Vagina (tissue), 2 donors: ENCODE measurements at regions of chr11 and their contacts with region 1.

Region 1: DNA sequence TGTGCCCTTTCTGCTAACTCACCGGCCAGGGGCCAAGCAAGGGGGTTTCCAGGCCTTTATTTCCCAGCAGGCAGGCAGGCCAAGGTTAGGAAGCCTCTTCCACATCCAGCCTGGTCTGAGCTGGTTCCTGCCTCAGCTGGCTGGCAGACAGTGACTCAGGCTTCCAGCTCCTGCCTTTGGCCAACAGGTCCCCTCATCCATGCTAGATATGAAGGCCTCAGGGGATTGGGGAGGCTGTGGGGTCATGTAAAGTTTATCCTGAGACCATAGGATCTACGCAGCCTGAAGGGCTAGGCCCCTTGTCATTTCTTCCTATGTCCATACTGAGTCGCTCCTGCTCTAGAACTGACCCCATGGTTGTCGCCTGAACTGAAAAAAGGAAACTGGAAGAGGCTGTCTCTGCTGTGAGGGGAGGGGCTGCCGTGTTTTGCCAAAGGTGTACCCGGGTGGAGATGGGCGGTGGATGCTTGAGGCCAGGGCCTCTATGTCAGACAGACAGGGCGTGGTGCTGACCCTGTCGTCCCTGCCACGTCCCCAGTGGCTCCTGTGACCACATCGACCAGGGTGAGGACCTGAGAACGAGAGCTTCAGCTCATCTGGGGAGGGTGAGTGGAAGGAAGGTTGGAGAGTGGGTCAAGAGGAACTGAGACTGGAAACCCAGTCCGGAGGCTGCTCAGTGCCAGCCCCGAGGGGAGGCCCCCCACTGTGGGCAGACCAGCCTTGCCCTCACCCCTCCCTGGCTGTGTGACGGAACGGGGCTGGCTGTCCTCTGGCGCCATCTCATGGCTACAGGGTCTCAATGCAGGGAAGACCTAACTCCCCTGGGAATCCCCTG is 17.0 kb downstream of the P2RY6 start:
- DNase-seq: no peak
- H3K4me3 ChIP-seq: no peak overlapping the region
- H3K27ac ChIP-seq: peak overlapping the region; percentile 3
- H3K4me1 ChIP-seq: peaks cover 12% of the 10 kb centered on the region
- H3K27me3 ChIP-seq: no peaks in the 10 kb centered on the region
- CTCF ChIP-seq: peak; percentile 35 to 81 (median 74)
- POLR2A ChIP-seq: no peak

Region 2: DNA sequence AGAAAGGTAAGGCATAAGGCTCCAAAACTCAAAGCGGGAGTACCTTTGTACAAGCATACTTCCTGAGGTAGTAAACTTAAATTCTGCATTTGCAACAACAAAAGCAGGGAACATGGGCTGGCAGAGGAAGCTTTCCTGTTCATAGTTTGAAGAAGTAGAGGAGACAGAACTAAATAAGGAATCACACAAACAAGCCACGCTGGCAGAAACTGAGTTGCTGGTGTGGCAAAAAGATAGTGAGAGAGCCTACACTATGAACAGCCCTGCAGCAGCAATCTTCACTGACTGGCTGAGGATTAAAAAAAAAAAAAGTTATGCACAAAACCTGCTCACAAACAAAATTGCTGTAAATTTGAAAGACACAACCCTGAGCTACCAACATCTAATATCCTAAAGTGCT is 193.5 kb before region 1 on chr11:
- intact Hi-C with region 1: no loop called
- DNase-seq: no peak
- H3K4me3 ChIP-seq: no peak overlapping the region
- H3K27ac ChIP-seq: no peak overlapping the region
- H3K4me1 ChIP-seq: peaks cover 11% of the 10 kb centered on the region
- H3K27me3 ChIP-seq: no peaks in the 10 kb centered on the region
- CTCF ChIP-seq: no peak
- POLR2A ChIP-seq: no peak

Region 3: GRCh38 chr11:73184953-73185671 is 104.0 kb before region 1 on chr11:
- intact Hi-C with region 1: loop called (anchors 10 kb)
- DNase-seq: no peak
- H3K4me3 ChIP-seq: no peak overlapping the region
- H3K27ac ChIP-seq: peak overlapping the region; percentile 56
- H3K4me1 ChIP-seq: peaks cover 25% of the 10 kb centered on the region
- H3K27me3 ChIP-seq: no peaks in the 10 kb centered on the region
- CTCF ChIP-seq: peak; percentile 48 to 70 (median 65)
- POLR2A ChIP-seq: no peak

Region 4: DNA sequence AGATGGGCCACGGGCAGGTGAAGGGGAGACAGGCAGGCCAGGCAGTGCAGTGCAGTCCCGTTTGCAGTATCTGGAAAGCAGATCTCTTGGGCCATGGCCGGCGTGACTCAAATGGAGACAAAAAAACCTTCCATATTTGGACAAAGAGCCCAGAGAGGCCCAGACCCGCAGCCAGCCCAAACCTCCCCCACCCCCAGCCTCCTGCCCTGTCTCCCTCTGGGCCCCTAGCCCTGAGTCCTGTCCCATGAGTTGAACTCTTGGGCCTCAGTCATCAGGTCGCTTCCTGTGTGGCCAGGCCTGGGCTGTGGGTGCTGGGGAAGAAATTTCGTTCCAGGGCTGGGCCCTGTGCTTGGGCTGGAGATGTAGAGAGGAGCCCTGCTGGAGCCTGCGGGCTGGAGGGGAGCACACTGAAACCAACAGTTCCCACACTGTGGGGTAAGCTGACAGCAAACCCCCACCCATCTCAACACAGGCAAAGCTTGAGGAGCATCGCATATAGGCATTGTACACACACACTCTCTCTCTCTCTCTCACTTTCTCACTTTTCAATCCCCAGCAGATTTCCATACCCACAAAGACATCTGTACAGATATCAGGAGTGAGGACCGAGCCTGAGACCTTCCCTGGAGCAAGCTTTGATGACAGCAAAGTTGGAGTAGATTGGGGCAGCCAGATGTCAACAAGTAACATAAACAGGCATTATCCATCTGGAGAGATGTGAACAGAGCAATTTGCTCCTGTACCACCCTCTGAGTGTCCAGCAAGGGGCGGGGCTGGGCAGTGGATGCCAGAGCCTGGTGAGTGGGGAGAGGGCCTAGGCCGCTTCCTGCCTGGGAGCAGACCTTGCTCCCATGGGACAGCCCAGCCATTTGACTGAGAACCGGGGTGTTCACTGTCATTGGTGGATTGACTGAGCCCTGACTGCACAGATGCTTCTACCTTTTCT is 36.2 kb after region 1 on chr11:
- intact Hi-C with region 1: no loop called
- DNase-seq: no peak
- H3K4me3 ChIP-seq: no peak overlapping the region
- H3K27ac ChIP-seq: peak overlapping the region; percentile 90
- H3K4me1 ChIP-seq: peaks cover 89% of the 10 kb centered on the region
- H3K27me3 ChIP-seq: no peaks in the 10 kb centered on the region
- CTCF ChIP-seq: no peak
- POLR2A ChIP-seq: no peak

Region 5: DNA sequence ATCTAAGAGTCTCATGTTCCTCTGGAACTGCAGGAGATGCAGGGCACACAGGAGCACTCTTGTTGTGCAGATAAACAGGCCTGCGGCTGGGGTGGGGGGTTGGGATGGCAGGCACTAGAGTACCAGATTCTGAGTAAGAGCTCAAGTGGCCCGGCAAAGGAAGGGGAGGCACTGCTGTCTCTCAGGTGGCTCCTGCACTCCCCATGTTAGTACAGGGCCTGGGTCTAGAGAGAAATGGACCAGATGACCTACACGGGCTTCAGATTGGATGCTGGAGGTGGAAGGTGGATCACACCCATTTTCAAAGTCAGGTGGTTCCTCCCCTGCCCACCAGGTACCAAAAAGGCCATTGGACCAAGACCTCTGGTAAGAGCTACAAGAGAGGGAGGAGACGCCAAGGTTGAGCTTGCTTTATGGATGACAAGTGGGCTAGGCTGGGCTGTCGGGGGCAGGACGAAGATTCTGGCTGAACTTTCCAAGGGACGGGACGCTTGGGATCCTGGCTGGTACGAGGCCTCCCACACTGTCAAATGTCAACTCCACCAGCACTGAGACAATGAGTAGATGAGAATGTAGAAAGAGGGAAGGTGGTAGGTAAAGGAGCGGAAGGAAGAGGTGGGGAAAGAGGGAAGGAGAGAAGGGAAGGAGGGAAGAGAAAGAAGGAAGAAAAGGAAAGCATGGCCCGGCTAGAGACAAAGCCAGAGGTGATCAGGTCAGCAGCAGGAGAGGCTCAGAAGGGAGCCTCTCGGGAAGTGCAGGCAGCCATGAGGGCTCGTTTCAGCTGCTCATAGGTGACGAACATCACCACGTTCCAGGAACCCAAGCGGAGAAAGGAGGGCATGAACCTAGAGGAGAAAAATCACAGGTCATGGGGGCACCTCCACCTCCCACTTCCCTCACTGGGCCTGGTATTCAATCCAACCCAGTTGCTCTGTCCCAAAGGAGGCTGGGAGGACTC is 685.5 kb after region 1 on chr11:
- intact Hi-C with region 1: loop called (anchors 5 kb)
- DNase-seq: no peak
- H3K4me3 ChIP-seq: no peak overlapping the region
- H3K27ac ChIP-seq: no peak overlapping the region
- H3K4me1 ChIP-seq: peaks cover 15% of the 10 kb centered on the region
- H3K27me3 ChIP-seq: no peaks in the 10 kb centered on the region
- CTCF ChIP-seq: no peak
- POLR2A ChIP-seq: no peak